Esophagus squamous epithelium (tissue), 5 donors: ENCODE measurements at regions of chr1 and their contacts with region 1.

Region 1: GRCh38 chr1:1122078-1122811 is 6.4 kb upstream of the C1orf159 start:
- DNase-seq: no peak
- H3K4me3 ChIP-seq: peak overlapping the region; percentile 7 to 58 (median 29)
- H3K27ac ChIP-seq: no peak overlapping the region
- H3K4me1 ChIP-seq: peaks cover 9 to 19% (median 9%) of the 10 kb centered on the region in 3 donors
- H3K27me3 ChIP-seq: peaks cover 0 to 73% (median 0%) of the 10 kb centered on the region in 4 donors
- CTCF ChIP-seq: peak; percentile 90 to 96 (median 92)
- POLR2A ChIP-seq: no peak

Region 2: DNA sequence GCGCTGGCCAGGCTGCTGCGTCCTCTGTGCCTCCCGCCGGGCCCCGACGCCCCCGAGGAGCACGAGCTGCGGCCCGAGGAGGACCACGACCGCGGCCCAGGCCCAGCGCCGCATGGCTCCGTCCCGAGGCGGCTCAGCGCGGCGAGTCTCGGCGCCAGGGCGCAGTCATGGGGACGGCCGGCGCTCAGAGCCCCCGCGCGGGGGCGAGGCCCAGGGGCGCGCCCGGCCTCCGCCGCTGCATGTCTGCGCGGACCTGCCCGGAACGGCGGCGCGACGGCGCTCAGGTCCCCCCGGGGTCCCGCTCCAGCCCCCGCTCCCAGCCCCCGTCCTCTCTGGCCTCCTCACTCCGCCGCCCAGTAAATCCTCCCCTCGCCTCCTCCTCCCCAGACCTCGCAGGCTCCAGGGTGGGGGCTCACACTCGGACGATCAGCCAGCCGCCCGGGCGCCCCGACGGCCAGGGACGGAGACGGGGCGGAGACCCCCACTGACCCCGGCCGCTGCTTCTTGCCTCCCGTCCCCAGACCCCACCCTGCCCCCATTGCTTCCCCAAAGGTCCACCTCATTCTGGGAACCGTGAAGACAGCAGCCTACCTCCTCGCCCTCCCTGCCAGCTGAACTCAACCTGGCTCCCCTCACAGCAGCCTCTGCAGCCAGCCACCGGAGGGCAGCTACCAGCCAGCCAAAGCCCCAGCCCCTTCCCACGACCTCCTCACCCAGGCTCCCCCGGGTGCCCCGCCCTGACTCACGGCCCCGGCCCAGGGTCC is 124.5 kb after region 1 on chr1 and contains the start of gene C1QTNF12:
- intact Hi-C with region 1: loop called (anchors 10 kb)
- DNase-seq: no peak
- H3K4me3 ChIP-seq: peak within 1 kb of the TSS in 2 of 4 donors; percentile 28 to 31
- H3K27ac ChIP-seq: no peak within 1 kb of the TSS
- H3K4me1 ChIP-seq: peaks cover 8 to 31% (median 12%) of the 10 kb centered on the region in 3 donors
- H3K27me3 ChIP-seq: peaks cover 0 to 44% (median 11%) of the 10 kb centered on the region in 4 donors
- CTCF ChIP-seq: no peak
- POLR2A ChIP-seq: no peak
- total RNA-seq, gene C1QTNF12: 0.79 to 3.0 (median 1.7) TPM in 3 of 4 donors, not detected in the other

Region 3: GRCh38 chr1:1291548-1292441 is 169.6 kb after region 1 on chr1:
- intact Hi-C with region 1: loop called (anchors 5 kb)
- DNase-seq: no peak
- H3K4me3 ChIP-seq: no peak overlapping the region
- H3K27ac ChIP-seq: no peak overlapping the region
- H3K4me1 ChIP-seq: peaks cover 9 to 23% (median 11%) of the 10 kb centered on the region in 3 donors
- H3K27me3 ChIP-seq: peaks cover 0 to 18% (median 0%) of the 10 kb centered on the region in 4 donors
- CTCF ChIP-seq: peak; percentile 60 to 90 (median 84)
- POLR2A ChIP-seq: no peak